MCF 10A (cell line): ENCODE measurements at regions of chr1 and their contacts with region 1.

Region 1: DNA sequence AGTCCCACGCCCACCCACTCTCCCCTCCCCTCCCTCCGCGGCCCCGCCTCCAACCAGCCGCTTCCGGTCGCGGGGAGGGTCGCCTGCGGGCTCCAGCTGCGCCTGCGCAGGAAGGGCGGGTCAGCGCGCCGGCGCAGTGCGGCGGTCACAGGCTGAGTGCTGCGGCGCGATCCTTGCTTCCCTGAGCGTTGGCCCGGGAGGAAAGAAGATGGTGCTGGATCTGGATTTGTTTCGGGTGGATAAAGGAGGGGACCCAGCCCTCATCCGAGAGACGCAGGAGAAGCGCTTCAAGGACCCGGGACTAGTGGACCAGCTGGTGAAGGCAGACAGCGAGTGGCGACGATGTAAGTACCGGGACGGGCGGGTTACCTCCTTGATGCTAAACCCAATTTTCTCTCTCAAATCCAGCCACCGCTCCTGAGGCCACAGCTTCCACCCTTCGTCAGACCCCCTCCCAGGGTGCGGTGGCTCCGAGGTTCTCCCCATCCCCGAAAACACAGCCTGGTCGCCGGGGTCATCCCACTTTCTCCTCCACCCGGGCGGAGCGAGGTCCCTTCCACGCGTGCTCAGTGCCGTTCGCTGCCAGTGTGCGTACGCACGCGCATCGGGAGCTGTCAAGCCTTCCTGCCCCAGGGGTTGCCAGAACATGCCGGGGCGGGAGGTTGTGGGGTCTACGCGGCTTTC is at the start of gene SARS1:
- DNase-seq: peak; percentile 85
- H3K4me3 Mint-ChIP-seq: peak within 1 kb of the TSS; percentile 98
- H3K27ac Mint-ChIP-seq: peak within 1 kb of the TSS; percentile 98
- H3K4me1 Mint-ChIP-seq: peaks cover 33% of the 10 kb centered on the region
- H3K27me3 Mint-ChIP-seq: no peaks in the 10 kb centered on the region
- CTCF ChIP-seq: no peak
- total RNA-seq, gene SARS1: 381 and 492 TPM in 2 replicates

Region 2: GRCh38 chr1:109075531-109076490 is 138.1 kb before region 1 on chr1 and contains the start of gene TAF13:
- CTCF ChIA-PET with region 1: no interaction called
- POLR2A ChIA-PET with region 1: interaction called, 12 read pairs
- intact Hi-C with region 1: no loop called
- DNase-seq: peak; percentile 93
- H3K4me3 Mint-ChIP-seq: peak within 1 kb of the TSS; percentile 99
- H3K27ac Mint-ChIP-seq: peak within 1 kb of the TSS; percentile 100
- H3K4me1 Mint-ChIP-seq: peaks cover 5% of the 10 kb centered on the region
- H3K27me3 Mint-ChIP-seq: no peaks in the 10 kb centered on the region
- CTCF ChIP-seq: no peak
- total RNA-seq, gene TAF13: 76.7 and 88.2 TPM in 2 replicates

Region 3: DNA sequence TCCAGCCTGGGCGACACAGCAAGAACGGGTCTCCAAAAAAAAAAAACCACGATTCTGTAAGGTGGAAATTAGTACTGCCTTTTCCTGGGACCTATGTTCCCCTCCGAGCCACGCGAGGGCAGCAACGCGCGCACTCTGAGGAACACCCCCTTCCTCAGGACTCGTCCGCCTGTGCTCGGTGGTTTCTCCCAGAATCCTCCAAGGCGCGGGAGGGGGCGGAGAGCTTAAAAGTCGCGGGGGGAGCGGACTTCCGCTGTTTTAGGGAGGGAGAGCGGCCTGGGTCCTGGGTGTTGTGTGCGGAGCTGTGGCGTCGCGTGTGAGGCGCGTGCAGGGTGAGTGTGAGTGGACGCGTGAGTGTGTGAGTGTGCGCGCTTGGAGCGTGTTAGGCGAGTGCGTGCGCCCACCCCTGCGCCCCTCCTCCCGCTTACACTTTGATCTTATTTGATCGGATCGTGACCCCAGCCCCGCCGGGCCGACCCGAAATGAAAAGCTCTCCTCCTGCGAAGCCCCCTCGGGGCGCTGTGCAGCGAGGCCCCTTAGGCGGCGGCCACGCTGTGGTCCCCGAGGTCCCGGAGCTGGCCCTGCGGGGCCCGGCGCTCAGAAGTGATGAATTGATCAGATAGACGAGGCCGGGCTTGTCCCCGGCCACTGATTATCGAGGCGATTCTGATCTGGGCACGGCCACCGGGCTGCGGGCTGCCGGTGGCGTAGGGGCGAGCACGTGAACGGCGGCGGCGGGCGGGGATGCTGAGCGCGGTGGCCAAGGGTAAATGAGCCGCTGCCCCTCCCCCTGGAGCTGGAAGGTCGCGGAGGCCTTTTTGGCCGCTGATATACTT is 113.8 kb before region 1 on chr1:
- CTCF ChIA-PET with region 1: interaction called, 10 read pairs
- POLR2A ChIA-PET with region 1: interaction called, 21 read pairs
- intact Hi-C with region 1: no loop called
- DNase-seq: peak; percentile 97
- H3K4me3 Mint-ChIP-seq: peak overlapping the region; percentile 97
- H3K27ac Mint-ChIP-seq: peak overlapping the region; percentile 96
- H3K4me1 Mint-ChIP-seq: peaks cover 7% of the 10 kb centered on the region
- H3K27me3 Mint-ChIP-seq: no peaks in the 10 kb centered on the region
- CTCF ChIP-seq: peak; percentile 56

Region 4: DNA sequence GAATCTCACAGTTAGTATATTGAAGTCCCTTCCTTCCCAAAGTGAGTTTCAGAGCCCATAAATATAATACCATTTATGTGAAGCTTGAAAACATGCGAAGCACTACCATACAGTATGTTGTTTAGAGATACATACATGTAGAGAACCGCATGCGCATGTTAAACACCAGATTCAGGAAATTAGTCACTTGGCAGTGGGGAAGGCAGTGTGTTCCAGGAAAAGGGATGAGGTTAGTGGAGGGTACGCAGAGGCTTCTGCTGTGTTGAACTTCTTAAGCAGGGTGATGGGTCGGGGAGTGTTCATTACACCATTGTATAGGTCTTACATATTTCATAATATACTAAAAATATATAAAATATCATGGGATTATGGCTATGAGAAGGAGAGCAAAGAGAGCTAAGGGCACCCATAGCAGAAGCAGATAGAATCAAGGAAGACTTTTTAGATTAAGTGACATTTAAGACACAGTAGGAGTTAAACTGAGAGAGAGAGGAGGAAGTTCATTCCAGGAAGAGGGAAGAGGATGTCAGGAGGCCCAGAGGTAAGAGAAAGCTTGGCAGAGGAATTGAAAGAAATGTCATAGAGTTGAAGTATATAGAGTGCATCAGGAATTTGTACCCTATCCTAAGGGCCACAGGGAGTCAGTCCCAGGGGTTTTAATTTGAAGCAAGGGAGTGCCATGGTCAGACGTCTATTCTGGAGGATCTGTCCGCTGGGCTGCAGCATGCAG is 43.7 kb before region 1 on chr1:
- CTCF ChIA-PET with region 1: no interaction called
- POLR2A ChIA-PET with region 1: no interaction called
- intact Hi-C with region 1: no loop called
- DNase-seq: peak; percentile 45
- H3K4me3 Mint-ChIP-seq: no peak overlapping the region
- H3K27ac Mint-ChIP-seq: no peak overlapping the region
- H3K4me1 Mint-ChIP-seq: no peaks in the 10 kb centered on the region
- H3K27me3 Mint-ChIP-seq: no peaks in the 10 kb centered on the region
- CTCF ChIP-seq: no peak

Region 5: DNA sequence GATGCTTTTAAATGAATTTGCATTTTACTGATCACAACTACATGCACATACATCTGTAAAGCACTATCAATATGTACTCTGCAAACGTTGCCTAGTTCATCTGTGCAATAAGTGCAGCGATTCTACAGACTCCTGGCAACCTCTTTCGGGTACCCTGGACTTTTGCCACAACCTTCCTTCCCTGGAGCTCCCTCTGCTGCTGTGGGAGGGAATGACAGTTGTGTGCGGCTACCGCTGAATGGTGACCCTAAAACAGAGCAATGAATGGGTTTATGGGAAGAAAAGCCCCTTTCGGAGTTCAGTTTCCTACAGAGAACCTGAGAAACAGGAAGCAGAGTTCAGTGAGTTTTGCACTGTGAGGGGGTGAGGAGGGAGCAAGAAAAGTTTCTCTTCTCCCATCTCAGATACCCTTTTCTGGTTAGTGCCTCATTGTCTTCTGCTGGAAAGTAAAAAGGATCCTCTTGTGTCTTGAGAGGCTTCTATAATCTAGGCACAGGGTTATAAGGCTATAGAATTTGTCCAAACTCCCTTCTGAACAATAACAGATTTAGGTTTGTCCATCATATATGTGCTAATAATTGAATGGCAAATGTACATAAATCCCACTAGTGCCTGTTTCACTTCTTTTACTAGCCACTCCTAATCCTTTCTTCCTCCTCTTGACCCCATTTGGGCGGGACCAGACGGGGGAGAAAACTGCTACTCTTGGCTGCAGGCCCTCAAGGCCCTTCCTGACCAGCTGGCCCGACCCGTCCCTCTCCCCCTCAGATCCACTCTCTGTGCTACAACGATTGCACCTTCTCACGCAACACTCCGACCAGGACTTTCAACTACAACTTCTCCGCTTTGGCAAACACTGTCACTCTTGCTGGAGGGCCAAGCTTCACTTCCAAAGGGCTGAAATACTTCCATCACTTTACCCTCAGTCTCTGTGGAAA is 20.0 kb before region 1 on chr1:
- CTCF ChIA-PET with region 1: interaction called, 95 read pairs
- POLR2A ChIA-PET with region 1: interaction called, 69 read pairs
- intact Hi-C with region 1: no loop called
- DNase-seq: peak; percentile 58
- H3K4me3 Mint-ChIP-seq: no peak overlapping the region
- H3K27ac Mint-ChIP-seq: no peak overlapping the region
- H3K4me1 Mint-ChIP-seq: peaks cover 24% of the 10 kb centered on the region
- H3K27me3 Mint-ChIP-seq: no peaks in the 10 kb centered on the region
- CTCF ChIP-seq: peak; percentile 59

Region 6: DNA sequence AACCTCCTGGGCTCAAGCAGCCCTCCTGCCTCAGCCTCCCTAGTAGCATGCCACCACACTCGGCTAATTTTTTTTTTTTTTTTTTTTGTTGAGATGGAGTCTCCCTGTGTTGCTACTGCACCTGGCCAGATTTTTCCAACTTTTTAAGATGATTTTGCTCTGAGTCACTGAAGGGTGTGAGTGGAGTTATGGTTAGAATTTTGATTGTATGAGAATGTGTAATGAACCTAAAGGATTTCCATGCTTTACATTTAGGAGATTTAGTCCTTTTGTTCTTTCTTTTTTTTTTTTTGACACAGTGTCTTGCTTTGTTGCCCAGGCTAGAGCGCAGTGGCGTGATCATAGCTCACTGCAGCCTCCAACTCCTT is 12.1 kb after region 1 on chr1:
- CTCF ChIA-PET with region 1: interaction called, 27 read pairs
- POLR2A ChIA-PET with region 1: interaction called, 72 read pairs
- intact Hi-C with region 1: no loop called
- DNase-seq: peak; percentile 23
- H3K4me3 Mint-ChIP-seq: no peak overlapping the region
- H3K27ac Mint-ChIP-seq: peak overlapping the region; percentile 78
- H3K4me1 Mint-ChIP-seq: peaks cover 12% of the 10 kb centered on the region
- H3K27me3 Mint-ChIP-seq: no peaks in the 10 kb centered on the region
- CTCF ChIP-seq: no peak

Region 7: GRCh38 chr1:109248797-109249642 is 35.1 kb after region 1 on chr1 and contains the start of gene CELSR2:
- CTCF ChIA-PET with region 1: interaction called, 5 read pairs
- POLR2A ChIA-PET with region 1: interaction called, 20 read pairs
- intact Hi-C with region 1: no loop called
- DNase-seq: peak; percentile 72
- H3K4me3 Mint-ChIP-seq: peak within 1 kb of the TSS; percentile 64
- H3K27ac Mint-ChIP-seq: no peak within 1 kb of the TSS
- H3K4me1 Mint-ChIP-seq: no peaks in the 10 kb centered on the region
- H3K27me3 Mint-ChIP-seq: no peaks in the 10 kb centered on the region
- CTCF ChIP-seq: no peak
- total RNA-seq, gene CELSR2: 6.9 and 7.2 TPM in 2 replicates